Caco-2 (cell line): ENCODE measurements at regions of chr16 and their contacts with region 1.

Region 1: GRCh38 chr16:14562691-14563491 is 67.2 kb downstream of the PARN start:
- DNase-seq: peak; percentile 67 to 72
- H3K4me3 ChIP-seq: no peak overlapping the region
- H3K4me3 Mint-ChIP-seq: peak overlapping the region; percentile 36
- H3K27ac Mint-ChIP-seq: peak overlapping the region; percentile 33
- H3K4me1 ChIP-seq: peaks cover 32% of the 10 kb centered on the region
- H3K4me1 Mint-ChIP-seq: peaks cover 28% of the 10 kb centered on the region
- H3K27me3 ChIP-seq: no peaks in the 10 kb centered on the region
- H3K27me3 Mint-ChIP-seq: no peaks in the 10 kb centered on the region
- CTCF ChIP-seq: peak; percentile 12 to 22

Region 2: GRCh38 chr16:14486520-14487303 is 76.2 kb before region 1 on chr16:
- CTCF ChIA-PET with region 1: no interaction called
- POLR2A ChIA-PET with region 1: no interaction called
- intact Hi-C with region 1: no loop called
- DNase-seq: peak; percentile 74 to 83
- H3K4me3 ChIP-seq: peak overlapping the region; percentile 10; the same call in 1 of the 2 replicates
- H3K4me3 Mint-ChIP-seq: peak overlapping the region; percentile 57
- H3K27ac Mint-ChIP-seq: peak overlapping the region; percentile 69
- H3K4me1 ChIP-seq: peaks cover 40% of the 10 kb centered on the region
- H3K4me1 Mint-ChIP-seq: peaks cover 18% of the 10 kb centered on the region
- H3K27me3 ChIP-seq: no peaks in the 10 kb centered on the region
- H3K27me3 Mint-ChIP-seq: no peaks in the 10 kb centered on the region
- CTCF ChIP-seq: peak in 1 of 2 experiments; percentile 4

Region 3: GRCh38 chr16:14545346-14545884 is 17.5 kb before region 1 on chr16:
- CTCF ChIA-PET with region 1: interaction called, 7 read pairs
- POLR2A ChIA-PET with region 1: no interaction called
- intact Hi-C with region 1: loop called (anchors 2 kb)
- DNase-seq: peak; percentile 41 to 67
- H3K4me3 ChIP-seq: no peak overlapping the region
- H3K4me3 Mint-ChIP-seq: no peak overlapping the region
- H3K27ac Mint-ChIP-seq: peak overlapping the region; percentile 67
- H3K4me1 ChIP-seq: peaks cover 33% of the 10 kb centered on the region
- H3K4me1 Mint-ChIP-seq: peaks cover 18% of the 10 kb centered on the region
- H3K27me3 ChIP-seq: no peaks in the 10 kb centered on the region
- H3K27me3 Mint-ChIP-seq: no peaks in the 10 kb centered on the region
- CTCF ChIP-seq: no peak